GM10248 (cell line): ENCODE measurements at regions of chr4 and their contacts with region 1.

Region 1: DNA sequence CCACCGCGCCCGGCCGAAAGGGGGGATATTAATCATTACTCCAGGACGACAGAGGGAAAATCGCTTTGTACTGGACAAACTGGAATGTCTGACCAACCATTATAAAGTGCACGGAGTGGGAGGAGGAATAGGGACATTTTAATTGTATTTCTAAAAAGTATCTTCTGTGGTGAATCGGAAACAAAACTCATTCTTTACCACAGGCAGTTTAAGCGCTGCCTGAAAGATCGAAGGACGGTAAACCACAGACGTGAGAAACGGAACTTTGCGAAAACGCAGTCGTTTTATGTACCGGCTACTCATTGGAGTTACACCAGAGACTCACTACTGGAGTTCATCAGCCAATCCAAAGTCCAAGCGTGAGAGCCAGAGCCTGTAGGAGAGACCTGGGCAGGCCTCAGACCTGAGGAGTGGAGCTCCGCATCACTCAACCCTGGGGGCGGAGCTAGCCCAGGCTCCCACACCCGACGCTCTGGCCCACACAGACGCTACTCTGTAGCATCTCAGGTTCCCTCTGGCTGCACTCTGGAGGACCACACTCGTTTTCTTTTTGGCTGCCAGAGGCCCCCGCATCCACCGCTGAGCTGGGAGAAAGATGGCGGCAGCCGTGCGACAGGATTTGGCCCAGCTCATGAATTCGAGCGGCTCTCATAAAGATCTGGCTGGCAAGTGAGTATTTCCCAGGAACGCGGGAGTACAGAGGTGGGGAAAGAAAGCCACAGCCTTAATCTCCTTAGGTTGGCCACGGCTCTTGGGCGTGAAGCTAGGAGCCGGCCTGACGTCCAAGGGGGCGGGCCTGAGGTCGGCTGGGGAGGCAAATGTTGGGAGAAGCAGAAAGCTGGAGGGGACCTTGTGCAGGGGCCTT is at the start of gene COPS4:
- DNase-seq: peak; percentile 96
- CTCF ChIP-seq: no peak

Region 2: GRCh38 chr4:82957045-82957444 is 77.8 kb before region 1 on chr4:
- CTCF ChIA-PET with region 1: no interaction called
- POLR2A ChIA-PET with region 1: no interaction called
- DNase-seq: no peak
- CTCF ChIP-seq: no peak

Region 3: DNA sequence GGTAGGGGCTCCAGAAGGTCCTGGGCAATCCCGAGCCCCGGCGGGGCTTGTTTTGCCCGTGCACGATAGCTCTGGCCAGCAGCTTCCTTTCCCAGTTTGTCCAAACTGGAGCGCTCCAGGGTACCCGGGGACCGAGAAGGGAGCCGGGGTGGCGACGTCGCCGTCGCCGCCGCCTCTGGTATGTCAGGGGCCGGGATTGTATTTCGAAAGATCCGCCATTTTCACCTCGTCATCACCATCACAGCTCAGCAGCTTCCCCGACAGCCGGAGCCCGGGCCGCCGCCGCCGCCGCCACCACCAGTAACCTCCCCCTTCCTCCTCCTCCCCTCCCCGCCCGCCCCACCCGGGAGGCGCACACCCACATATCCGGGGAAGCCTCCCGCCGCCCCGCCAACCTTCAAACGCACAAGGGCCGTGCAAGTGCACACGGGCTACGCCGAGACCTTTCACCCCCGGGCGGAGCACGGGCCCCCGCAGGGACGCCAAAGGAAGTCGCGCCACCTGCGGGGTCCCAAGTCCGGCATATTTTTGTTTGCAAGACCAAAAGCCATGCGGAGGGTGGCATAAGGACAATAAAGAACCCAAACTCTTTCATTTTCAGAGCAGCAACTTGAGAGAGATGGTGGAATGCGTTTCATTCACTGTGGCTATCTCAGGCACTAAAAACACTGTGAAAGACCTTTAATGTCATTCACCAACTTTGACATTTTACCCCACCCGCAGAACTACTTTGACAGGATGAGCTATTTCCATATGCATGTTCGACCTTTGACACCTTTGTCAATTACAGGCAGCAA is 24.1 kb before region 1 on chr4 and contains the start of gene LIN54:
- CTCF ChIA-PET with region 1: interaction called, 10 read pairs
- POLR2A ChIA-PET with region 1: interaction called, 5 read pairs
- DNase-seq: peak; percentile 86
- CTCF ChIP-seq: no peak